ENCODE measurements at regions of chr12 and their contacts with region 1.

Region 1: DNA sequence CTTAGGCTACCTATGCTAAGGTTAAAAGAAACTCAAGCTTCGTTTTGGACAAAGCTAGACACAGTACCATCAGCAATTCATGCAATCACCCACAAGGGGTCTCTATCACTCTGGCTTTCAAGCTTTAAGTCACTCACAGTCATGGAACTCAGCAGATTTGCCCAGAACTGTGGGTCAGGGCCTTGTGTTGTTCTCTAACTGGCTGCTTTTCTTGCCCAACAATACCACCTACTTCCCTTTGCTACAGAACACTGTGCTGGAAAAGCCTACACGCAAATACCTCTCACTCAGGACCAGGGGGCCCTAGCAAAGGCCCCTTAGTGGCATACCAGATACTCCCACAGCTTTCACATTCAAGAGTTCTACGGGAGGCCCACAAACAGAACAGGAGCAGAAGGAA is 9.1 kb downstream of the NEMP1 start:
- DNase-seq: peak in 2 of 3 donors; percentile 37 to 75
- ATAC-seq: peak; percentile 98 to 99 (median 98)
- H3K4me3 ChIP-seq: no peak overlapping the region
- H3K27ac ChIP-seq: peak overlapping the region; percentile 52 to 70 (median 70)
- H3K4me1 ChIP-seq: peaks cover 0 to 9% (median 0%) of the 10 kb centered on the region in 4 donors
- H3K27me3 ChIP-seq: no peaks in the 10 kb centered on the region
- CTCF ChIP-seq: peak; percentile 87 to 97 (median 93)
- POLR2A ChIP-seq: no peak

Region 2: GRCh38 chr12:57106021-57106708 is 36.6 kb after region 1 on chr12:
- intact Hi-C with region 1: loop called (anchors 5 kb)
- DNase-seq: no peak
- ATAC-seq: no peak
- H3K4me3 ChIP-seq: no peak overlapping the region
- H3K27ac ChIP-seq: no peak overlapping the region
- H3K4me1 ChIP-seq: peaks cover 0 to 44% (median 16%) of the 10 kb centered on the region in 4 donors
- H3K27me3 ChIP-seq: no peaks in the 10 kb centered on the region
- CTCF ChIP-seq: no peak
- POLR2A ChIP-seq: no peak

Region 3: GRCh38 chr12:57111031-57111734 is 41.7 kb after region 1 on chr12 and contains the start of gene STAT6:
- intact Hi-C with region 1: loop called (anchors 5 kb)
- DNase-seq: peak; percentile 83 to 87 (median 86)
- ATAC-seq: peak; percentile 62 to 70 (median 67)
- H3K4me3 ChIP-seq: peak within 1 kb of the TSS; percentile 63 to 66 (median 66)
- H3K27ac ChIP-seq: peak within 1 kb of the TSS; percentile 93 to 100 (median 100)
- H3K4me1 ChIP-seq: peaks cover 0 to 24% (median 3%) of the 10 kb centered on the region in 4 donors
- H3K27me3 ChIP-seq: no peaks in the 10 kb centered on the region
- CTCF ChIP-seq: no peak
- POLR2A ChIP-seq: peak; percentile 68
- total RNA-seq, gene STAT6: 61.8 to 108 (median 94.7) TPM

Measured in right lobe of liver (tissue), 6 donors.